Activated CD4-positive, alpha-beta memory T cell treated with anti-CD3 and anti-CD28 coated beads, Interleukin-2, amount 10 ng/mL, durations not matched to agents 7 days and 5 days (primary cell): ENCODE measurements at regions of chr16 and their contacts with region 1.

Region 1: GRCh38 chr16:10918294-10919002 is 23.8 kb downstream of the DEXI start:
- DNase-seq: peak; percentile 86
- H3K4me3 Mint-ChIP-seq: no peak overlapping the region
- H3K27ac Mint-ChIP-seq: no peak overlapping the region
- H3K4me1 Mint-ChIP-seq: peaks cover 13% of the 10 kb centered on the region
- H3K27me3 Mint-ChIP-seq: no peaks in the 10 kb centered on the region

Region 2: DNA sequence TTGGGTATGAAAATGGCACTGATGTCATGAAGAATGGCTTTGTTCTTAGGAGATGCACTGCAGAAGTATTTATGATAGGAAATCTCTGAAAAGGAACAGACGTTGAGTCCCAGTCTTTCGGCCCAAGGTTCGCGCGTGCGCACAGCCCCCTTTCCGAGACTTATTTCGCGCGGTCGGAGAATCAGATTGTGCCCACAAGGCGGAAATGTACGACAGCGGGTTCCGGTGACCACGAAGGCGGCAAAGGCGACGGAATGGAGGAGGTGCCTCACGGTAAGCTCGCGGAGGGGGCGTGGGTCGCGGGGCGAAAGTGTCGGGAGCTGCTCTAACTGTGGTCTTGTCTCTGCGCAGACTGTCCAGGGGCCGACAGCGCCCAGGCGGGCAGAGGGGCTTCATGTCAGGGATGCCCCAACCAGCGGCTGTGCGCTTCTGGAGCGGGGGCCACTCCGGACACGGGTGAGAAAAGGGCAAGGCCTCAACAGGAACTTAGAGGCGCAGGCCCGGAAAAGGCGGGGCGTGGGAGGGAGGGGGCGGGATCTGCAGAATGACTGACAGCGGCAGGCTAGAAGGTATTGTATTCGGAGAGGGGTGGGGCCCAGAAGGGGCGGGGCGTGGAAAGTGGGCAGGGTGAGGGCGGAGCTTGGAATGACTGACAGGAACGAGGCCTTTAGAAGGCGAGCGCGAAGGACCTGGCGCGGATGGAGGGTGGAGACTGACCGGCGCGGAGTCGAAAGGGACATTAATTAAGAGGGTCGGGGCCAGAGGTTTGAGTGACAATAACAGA is 174.6 kb before region 1 on chr16 and contains the start of gene NUBP1:
- CTCF ChIA-PET with region 1: interaction called, 39 read pairs
- POLR2A ChIA-PET with region 1: interaction called, 6 read pairs
- DNase-seq: peak; percentile 100
- H3K4me3 Mint-ChIP-seq: peak within 1 kb of the TSS; percentile 86
- H3K27ac Mint-ChIP-seq: peak within 1 kb of the TSS; percentile 97
- H3K4me1 Mint-ChIP-seq: peaks cover 57% of the 10 kb centered on the region
- H3K27me3 Mint-ChIP-seq: no peaks in the 10 kb centered on the region
- total RNA-seq, gene NUBP1: 29.4 to 31.5 TPM

Region 3: DNA sequence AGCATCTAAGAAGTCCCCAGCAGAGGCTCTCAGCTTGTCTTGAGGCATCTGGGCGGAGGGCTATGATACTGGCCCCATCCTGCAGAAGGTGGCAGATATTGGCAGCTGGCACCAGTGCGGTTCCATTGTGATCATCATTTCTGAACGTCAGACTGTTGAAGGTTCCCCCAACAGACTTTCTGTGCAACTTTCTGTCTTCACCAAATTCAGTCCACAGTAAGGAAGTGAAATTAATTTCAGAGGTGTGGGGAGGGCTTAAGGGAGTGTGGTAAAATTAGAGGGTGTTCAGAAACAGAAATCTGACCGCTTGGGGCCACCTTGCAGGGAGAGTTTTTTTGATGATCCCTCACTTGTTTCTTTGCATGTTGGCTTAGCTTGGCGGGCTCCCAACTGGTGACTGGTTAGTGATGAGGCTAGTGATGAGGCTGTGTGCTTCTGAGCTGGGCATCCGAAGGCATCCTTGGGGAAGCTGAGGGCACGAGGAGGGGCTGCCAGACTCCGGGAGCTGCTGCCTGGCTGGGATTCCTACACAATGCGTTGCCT is 41.6 kb before region 1 on chr16 and contains the start of gene CIITA:
- CTCF ChIA-PET with region 1: interaction called, 12 read pairs
- POLR2A ChIA-PET with region 1: interaction called, 6 read pairs
- DNase-seq: peak; percentile 80
- H3K4me3 Mint-ChIP-seq: peak within 1 kb of the TSS; percentile 96
- H3K27ac Mint-ChIP-seq: peak within 1 kb of the TSS; percentile 87
- H3K4me1 Mint-ChIP-seq: peaks cover 93% of the 10 kb centered on the region
- H3K27me3 Mint-ChIP-seq: no peaks in the 10 kb centered on the region
- total RNA-seq, gene CIITA: 48.5 to 48.9 TPM

Region 4: GRCh38 chr16:10906914-10907756 is 11.3 kb before region 1 on chr16:
- CTCF ChIA-PET with region 1: interaction called, 13 read pairs
- POLR2A ChIA-PET with region 1: no interaction called
- DNase-seq: no peak
- H3K4me3 Mint-ChIP-seq: no peak overlapping the region
- H3K27ac Mint-ChIP-seq: no peak overlapping the region
- H3K4me1 Mint-ChIP-seq: no peaks in the 10 kb centered on the region
- H3K27me3 Mint-ChIP-seq: no peaks in the 10 kb centered on the region

Region 5: DNA sequence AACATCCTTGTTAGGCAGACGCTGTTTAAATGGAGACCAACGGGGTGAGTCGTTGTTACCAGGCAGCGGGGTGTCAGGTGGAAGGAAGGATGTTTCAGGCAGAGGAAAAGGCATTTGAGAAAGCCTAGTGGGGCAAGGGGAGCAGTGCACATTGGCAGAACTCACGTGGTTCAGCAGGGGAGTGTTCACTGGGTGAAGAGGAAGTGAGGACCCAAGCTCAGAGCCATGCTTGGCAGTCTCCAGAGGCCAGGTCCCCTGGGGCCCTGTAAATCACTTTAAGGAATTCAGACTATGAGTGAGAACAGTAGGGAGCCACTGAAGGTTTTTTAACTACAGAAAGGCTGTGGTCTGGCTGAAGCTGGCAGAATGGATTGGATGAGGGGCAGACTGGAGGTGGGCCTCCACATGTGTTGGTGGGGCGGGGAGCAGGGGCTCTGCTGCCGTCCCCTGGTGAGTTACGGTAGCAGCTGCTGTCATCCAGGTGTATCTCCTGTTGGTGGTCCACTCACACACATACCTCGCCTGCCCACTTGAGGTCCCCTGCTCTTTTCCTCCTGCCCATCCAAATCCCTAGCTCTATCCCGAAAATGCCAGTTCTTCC is 31.0 kb after region 1 on chr16:
- CTCF ChIA-PET with region 1: no interaction called
- POLR2A ChIA-PET with region 1: no interaction called
- DNase-seq: peak; percentile 66
- H3K4me3 Mint-ChIP-seq: no peak overlapping the region
- H3K27ac Mint-ChIP-seq: peak overlapping the region; percentile 16
- H3K4me1 Mint-ChIP-seq: peaks cover 62% of the 10 kb centered on the region
- H3K27me3 Mint-ChIP-seq: no peaks in the 10 kb centered on the region